ENCODE measurements at regions of chr19 and their contacts with region 1.

Region 1: GRCh38 chr19:49014123-49014869 is 2.6 kb downstream of the LHB start:
- DNase-seq: no peak
- H3K4me3 ChIP-seq: no peak overlapping the region
- H3K27ac ChIP-seq: no peak overlapping the region
- H3K4me1 ChIP-seq: peaks cover 10% of the 10 kb centered on the region
- H3K27me3 ChIP-seq: no peaks in the 10 kb centered on the region
- CTCF ChIP-seq: no peak

Region 2: GRCh38 chr19:48975947-48976847 is 38.1 kb before region 1 on chr19:
- CTCF ChIA-PET with region 1: interaction called, 14 read pairs
- dilution Hi-C with region 1: no loop called
- in situ Hi-C with region 1: no loop called
- intact Hi-C with region 1: no loop called
- DNase-seq: no peak
- H3K4me3 ChIP-seq: no peak overlapping the region
- H3K27ac ChIP-seq: no peak overlapping the region
- H3K4me1 ChIP-seq: peaks cover 11% of the 10 kb centered on the region
- H3K27me3 ChIP-seq: no peaks in the 10 kb centered on the region
- CTCF ChIP-seq: no peak

Region 3: DNA sequence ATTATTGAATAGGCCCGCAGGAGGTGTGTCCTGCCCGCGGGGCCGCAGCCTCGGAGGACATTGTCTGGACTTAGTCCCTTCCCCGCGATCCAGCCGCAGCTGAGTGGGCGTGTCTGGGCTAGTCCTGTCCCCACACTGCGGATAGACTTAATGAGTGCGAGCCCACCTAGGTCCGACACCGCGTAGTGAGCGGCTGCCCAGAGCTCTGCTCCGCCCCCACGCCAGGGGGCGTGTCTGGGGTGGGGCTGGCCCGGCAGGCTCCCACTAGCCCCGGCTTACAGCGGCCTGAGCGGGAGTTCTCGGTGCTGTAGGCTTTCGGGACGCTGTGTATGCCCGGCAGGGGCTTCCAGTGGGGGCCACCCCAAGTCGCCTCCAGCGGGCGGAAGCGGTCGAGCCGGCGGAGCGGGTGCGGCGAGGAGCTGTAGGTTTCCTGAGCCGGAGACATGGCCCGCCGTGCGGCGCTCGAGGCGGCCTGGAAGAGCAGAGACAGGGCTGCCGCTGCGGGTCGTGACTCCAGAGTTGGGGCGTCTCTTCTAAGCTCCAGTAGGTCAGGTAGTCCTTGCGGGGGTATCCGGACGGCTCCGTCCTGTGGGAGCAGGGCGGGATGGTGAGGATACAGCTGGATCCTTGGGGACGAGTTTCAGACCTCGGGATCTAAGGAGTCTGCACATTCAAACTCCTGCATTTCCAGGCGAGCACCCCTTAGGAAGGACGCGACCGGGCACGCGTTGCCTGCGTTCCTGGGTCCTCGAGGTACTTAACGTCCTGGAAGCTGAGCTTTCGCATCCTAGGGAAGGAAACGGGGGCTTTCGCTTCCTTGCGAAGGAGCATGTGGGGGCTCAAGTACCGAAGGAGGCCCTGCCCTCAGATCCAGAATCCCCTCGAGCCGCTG is 42.0 kb after region 1 on chr19:
- CTCF ChIA-PET with region 1: no interaction called
- dilution Hi-C with region 1: no loop called
- in situ Hi-C with region 1: loop called in 1 of 2 experiments (anchors 5 kb)
- intact Hi-C with region 1: no loop called
- DNase-seq: peak; percentile 69
- H3K4me3 ChIP-seq: peak overlapping the region; percentile 57 to 83 (median 69)
- H3K27ac ChIP-seq: peak overlapping the region; percentile 52
- H3K4me1 ChIP-seq: peaks cover 20% of the 10 kb centered on the region
- H3K27me3 ChIP-seq: no peaks in the 10 kb centered on the region
- CTCF ChIP-seq: peak in 1 of 2 donors; percentile 37

Region 4: GRCh38 chr19:49142866-49143335 is 128.6 kb after region 1 on chr19:
- CTCF ChIA-PET with region 1: no interaction called
- dilution Hi-C with region 1: no loop called
- in situ Hi-C with region 1: no loop called
- intact Hi-C with region 1: no loop called
- DNase-seq: peak; percentile 76
- H3K4me3 ChIP-seq: peak overlapping the region; percentile 46 to 77 (median 53)
- H3K27ac ChIP-seq: no peak overlapping the region
- H3K4me1 ChIP-seq: no peaks in the 10 kb centered on the region
- H3K27me3 ChIP-seq: no peaks in the 10 kb centered on the region
- CTCF ChIP-seq: no peak